ENCODE measurements at regions of chr4 and their contacts with region 1.

Region 1: GRCh38 chr4:110124711-110125110 is 73.7 kb downstream of the ELOVL6 start:
- DNase-seq: no peak

Region 2: DNA sequence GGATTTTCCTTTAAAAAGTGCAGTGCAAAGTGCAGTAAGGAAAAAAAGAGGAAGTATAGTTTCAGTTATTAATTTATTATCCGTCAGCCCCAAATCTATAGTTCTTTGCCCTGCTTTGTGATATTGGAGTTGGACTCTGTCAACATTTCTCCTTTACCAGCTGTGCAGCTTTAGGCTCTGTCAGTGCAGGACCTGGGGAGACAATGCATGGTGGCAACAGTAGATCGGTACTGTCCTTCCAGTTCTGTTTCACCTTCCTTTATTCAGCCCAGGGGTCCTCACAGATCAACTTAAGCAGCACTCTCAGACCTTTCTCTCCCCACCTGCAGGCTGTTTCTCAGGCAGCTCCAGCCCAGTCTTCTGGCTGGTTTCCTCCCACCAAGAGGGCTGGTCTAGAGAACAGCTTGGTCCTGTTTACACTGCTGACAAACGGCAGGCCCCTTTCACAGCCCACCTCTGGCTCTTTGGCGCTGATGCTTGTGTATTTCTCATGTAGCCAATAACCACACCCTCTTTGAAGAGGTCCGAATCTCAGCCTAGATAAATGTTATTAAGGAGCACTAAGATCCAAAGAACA is 493.1 kb before region 1 on chr4:
- intact Hi-C with region 1: no loop called
- DNase-seq: no peak

Region 3: GRCh38 chr4:109921384-109921808 is 203.3 kb before region 1 on chr4:
- intact Hi-C with region 1: loop called in 1 of 2 experiments (anchors 5 kb)
- DNase-seq: no peak

Region 4: GRCh38 chr4:110106928-110107296 is 17.8 kb before region 1 on chr4:
- intact Hi-C with region 1: no loop called
- DNase-seq: no peak